Motor neuron (in vitro differentiated cells): ENCODE measurements at regions of chr6 and their contacts with region 1.

Region 1: GRCh38 chr6:31143148-31143547 is 4.3 kb upstream of the PSORS1C2 start:
- ATAC-seq: peak in 5 of 8 experiments; percentile 3 to 52 (median 28)
- H3K4me3 ChIP-seq: no peak overlapping the region
- H3K27ac ChIP-seq: no peak overlapping the region
- H3K4me1 ChIP-seq: peaks cover 8 to 11% of the 10 kb centered on the region in 2 donors

Region 2: GRCh38 chr6:31197559-31198305 is 54.6 kb after region 1 on chr6:
- in situ Hi-C with region 1: loop called in 1 of 9 experiments (anchors 5 kb)
- ATAC-seq: peak; percentile 76 to 88 (median 85)
- H3K4me3 ChIP-seq: peak overlapping the region; percentile 45 to 69 (median 59)
- H3K27ac ChIP-seq: peak overlapping the region; percentile 89 to 96
- H3K4me1 ChIP-seq: peaks cover 3 to 7% of the 10 kb centered on the region in 2 donors

Region 3: GRCh38 chr6:31806465-31807272 is 663.5 kb after region 1 on chr6 and contains the start of gene LSM2:
- in situ Hi-C with region 1: no loop called
- ATAC-seq: peak; percentile 96 to 98 (median 98)
- H3K4me3 ChIP-seq: peak within 1 kb of the TSS; percentile 42 to 75 (median 57)
- H3K27ac ChIP-seq: peak within 1 kb of the TSS; percentile 64 to 83
- H3K4me1 ChIP-seq: peaks cover 5 to 11% of the 10 kb centered on the region in 2 donors
- total RNA-seq, gene LSM2: 34.8 to 79.8 (median 47.1) TPM